Gastrocnemius medialis (tissue), 4 donors: ENCODE measurements at regions of chr1 and their contacts with region 1.

Region 1: DNA sequence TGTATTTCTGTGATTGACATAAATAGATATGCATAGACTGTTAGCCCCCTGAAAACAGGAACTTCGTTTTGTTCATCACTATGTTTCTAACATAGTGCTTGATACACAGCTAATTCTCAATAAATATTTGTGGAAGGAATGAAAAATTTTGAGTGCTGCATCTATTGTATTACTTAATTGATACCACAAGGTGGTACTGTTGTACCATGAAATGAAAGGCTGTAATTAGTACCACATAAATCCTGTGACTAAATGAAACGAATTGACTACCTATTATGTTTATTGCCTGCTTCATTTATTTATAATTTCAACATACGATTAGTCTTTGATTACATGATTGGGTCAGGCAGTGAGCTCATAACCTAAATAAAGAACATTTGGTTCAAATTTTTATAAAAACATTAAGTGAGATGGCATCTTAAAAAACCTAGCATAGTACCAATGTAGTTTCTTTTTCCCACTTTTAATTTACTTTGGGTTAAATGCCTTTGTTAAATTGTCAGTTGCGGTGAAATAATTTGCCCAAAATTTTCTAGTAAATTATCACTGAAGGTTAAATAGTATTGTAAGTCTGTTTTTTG is 15.0 kb upstream of the TGFB2 start:
- DNase-seq: no peak
- ATAC-seq: no peak
- H3K4me3 ChIP-seq: no peak overlapping the region
- H3K27ac ChIP-seq: no peak overlapping the region
- H3K4me1 ChIP-seq: peaks cover 0 to 3% of the 10 kb centered on the region in 2 donors
- H3K27me3 ChIP-seq: no peaks in the 10 kb centered on the region
- CTCF ChIP-seq: peak; percentile 65 to 77 (median 68)
- POLR2A ChIP-seq: no peak

Region 2: GRCh38 chr1:218510153-218510772 is 180.1 kb after region 1 on chr1:
- in situ Hi-C with region 1: loop called in 2 of 4 experiments (anchors 5 to 10 kb)
- intact Hi-C with region 1: no loop called
- DNase-seq: no peak
- ATAC-seq: no peak
- H3K4me3 ChIP-seq: no peak overlapping the region
- H3K27ac ChIP-seq: no peak overlapping the region
- H3K4me1 ChIP-seq: no peaks in the 10 kb centered on the region
- H3K27me3 ChIP-seq: no peaks in the 10 kb centered on the region
- CTCF ChIP-seq: no peak
- POLR2A ChIP-seq: no peak

Region 3: GRCh38 chr1:219066631-219067349 is 736.7 kb after region 1 on chr1:
- in situ Hi-C with region 1: loop called in 1 of 4 experiments (anchors 10 kb)
- intact Hi-C with region 1: no loop called
- DNase-seq: no peak
- ATAC-seq: no peak
- H3K4me3 ChIP-seq: no peak overlapping the region
- H3K27ac ChIP-seq: no peak overlapping the region
- H3K4me1 ChIP-seq: no peaks in the 10 kb centered on the region
- H3K27me3 ChIP-seq: no peaks in the 10 kb centered on the region
- CTCF ChIP-seq: peak in 1 of 5 experiments; percentile 16
- POLR2A ChIP-seq: no peak

Region 4: GRCh38 chr1:219416594-219417238 is 1086.6 kb after region 1 on chr1:
- in situ Hi-C with region 1: loop called in 1 of 4 experiments (anchors 25 kb)
- intact Hi-C with region 1: loop called (anchors 10 kb)
- DNase-seq: peak in 1 of 2 donors; percentile 24
- ATAC-seq: peak in 1 of 2 donors; percentile 33
- H3K4me3 ChIP-seq: no peak overlapping the region
- H3K27ac ChIP-seq: no peak overlapping the region
- H3K4me1 ChIP-seq: peaks cover 4 to 7% of the 10 kb centered on the region in 2 donors
- H3K27me3 ChIP-seq: no peaks in the 10 kb centered on the region
- CTCF ChIP-seq: peak in 4 of 5 experiments; percentile 22 to 53 (median 34)
- POLR2A ChIP-seq: no peak

Region 5: DNA sequence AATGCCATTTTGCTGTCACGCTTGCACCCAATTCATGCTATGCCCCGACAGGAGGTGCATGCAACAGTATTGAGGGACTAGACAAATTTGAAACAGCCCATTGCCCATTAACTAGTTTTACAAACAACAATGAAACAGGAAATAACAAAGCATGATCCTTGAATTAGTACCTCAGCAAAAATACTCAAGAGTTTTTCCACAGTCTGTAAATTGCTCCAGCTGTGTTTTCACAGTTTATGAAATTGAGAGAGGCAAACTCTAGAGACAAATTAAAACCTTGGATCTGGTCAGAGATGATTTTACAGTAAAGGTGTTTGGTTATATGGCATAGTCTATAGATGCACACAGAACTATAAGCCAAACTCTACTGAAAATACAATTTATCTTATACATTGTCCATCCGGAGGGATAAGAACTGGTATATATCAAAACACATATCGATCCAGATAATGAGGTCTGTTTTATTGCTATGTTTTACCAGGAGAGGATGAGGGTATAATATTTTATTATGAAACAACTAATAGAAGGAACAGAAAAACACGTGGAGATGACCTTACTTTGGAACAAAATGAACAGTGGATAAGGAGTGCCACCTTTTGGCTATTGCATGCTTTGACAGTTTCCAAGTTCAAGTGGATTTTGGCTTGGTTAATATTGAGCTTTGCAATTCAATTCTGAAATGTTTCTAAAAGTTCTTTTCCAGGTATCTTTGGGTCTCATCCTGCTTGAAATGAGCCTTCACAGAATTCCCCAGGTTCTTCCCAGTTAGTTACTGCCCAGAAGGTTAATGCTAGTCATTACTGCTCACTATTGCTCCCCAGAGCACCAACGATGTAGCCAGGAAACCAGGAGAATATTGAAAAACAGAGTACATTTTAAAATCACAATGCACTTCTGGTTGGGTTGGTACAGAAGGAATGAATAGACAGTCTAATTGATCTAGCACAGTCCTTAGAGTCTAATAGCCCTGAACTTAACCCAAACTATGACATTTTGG is 1237.1 kb after region 1 on chr1:
- in situ Hi-C with region 1: loop called in 2 of 4 experiments (anchors 10 kb)
- intact Hi-C with region 1: loop called (anchors 5 kb)
- DNase-seq: no peak
- ATAC-seq: peak; percentile 47 to 60
- H3K4me3 ChIP-seq: no peak overlapping the region
- H3K27ac ChIP-seq: no peak overlapping the region
- H3K4me1 ChIP-seq: no peaks in the 10 kb centered on the region
- H3K27me3 ChIP-seq: no peaks in the 10 kb centered on the region
- CTCF ChIP-seq: peak in 2 of 5 experiments; percentile 23 to 32
- POLR2A ChIP-seq: no peak

Region 6: DNA sequence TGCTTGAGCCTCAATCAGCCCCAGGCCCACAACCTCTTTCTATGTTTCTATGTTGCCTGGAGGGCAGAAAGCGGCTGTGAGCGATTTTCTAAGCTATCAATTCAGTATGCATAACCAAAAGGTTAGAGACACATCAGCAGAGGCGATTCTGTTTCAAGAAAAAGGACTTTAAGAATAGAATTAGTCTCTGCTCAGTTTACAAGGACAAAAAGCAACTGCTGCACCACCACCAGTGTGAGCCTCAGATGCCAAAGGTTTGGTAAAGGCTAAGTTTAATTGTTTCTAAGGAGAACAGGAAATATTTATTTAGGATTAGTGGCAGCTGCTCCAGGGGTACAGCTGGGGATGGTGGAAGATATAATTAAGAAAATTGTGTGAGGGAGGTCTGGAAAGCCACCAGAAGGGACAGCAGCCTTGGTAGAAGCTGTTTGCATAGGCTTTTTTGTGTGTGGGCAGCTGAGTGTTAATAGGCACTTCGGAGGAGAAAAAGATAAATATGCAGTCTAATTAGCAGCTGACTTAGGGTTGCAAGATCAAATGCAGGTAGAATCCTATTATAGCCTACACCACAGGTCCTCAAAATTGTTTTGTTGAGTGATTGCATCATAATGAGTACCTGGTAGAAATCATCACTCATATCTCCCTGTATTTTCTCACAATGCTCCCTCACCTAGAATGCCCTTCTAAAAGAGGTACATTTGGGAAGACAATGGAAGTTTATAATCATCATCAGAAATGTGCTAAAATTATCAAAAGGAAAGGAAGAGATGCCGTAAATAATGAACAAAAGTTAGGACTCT is 1247.0 kb after region 1 on chr1:
- in situ Hi-C with region 1: loop called in 1 of 4 experiments (anchors 10 kb)
- intact Hi-C with region 1: no loop called
- DNase-seq: no peak
- ATAC-seq: no peak
- H3K4me3 ChIP-seq: no peak overlapping the region
- H3K27ac ChIP-seq: no peak overlapping the region
- H3K4me1 ChIP-seq: no peaks in the 10 kb centered on the region
- H3K27me3 ChIP-seq: no peaks in the 10 kb centered on the region
- CTCF ChIP-seq: no peak
- POLR2A ChIP-seq: no peak

Region 7: DNA sequence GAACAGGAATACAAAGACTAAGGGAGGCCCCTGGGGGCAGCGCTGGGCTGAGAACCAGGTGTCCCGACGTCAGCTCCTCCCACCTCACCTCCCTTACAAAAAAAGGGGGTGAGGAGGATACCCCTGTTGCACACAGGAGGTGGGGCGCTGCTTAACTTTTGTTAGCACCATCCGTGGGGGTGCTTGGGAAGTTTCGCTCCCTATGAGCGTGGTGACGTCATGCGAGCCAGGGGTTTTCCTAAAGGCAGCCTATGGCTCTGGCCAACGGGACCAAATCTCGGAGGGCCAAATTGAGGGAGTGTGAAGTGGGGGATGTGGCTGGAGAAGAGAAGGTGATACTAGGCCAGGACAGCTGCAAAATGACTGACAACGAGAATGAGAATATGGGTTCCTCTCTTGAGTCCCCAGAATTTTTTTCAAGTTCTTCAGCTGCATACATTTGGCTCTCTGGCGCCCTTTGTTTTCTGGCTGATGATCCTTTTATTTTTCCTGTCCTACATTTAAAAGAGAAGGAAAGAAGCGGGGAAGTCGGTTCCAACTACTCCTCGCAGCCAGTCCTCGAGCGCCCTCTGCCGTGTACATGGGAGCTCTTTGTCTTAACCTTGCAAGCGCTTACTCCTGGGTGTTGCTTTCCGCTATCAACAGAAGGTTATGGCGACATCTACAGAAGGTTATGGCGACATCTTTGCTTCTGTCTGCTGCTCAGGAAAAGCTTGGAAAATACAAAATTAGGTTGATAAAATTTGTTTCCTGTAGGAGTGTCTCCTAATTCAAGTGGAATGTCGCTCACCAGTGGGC is 1330.7 kb after region 1 on chr1:
- in situ Hi-C with region 1: loop called (anchors 25 kb)
- intact Hi-C with region 1: loop called (anchors 10 kb)
- DNase-seq: peak; percentile 64 to 78
- ATAC-seq: peak; percentile 83 to 87
- H3K4me3 ChIP-seq: peak overlapping the region in 3 of 4 donors; percentile 0 to 32 (median 19)
- H3K27ac ChIP-seq: no peak overlapping the region
- H3K4me1 ChIP-seq: peaks cover 0 to 5% of the 10 kb centered on the region in 2 donors
- H3K27me3 ChIP-seq: no peaks in the 10 kb centered on the region
- CTCF ChIP-seq: peak in 4 of 5 experiments; percentile 26 to 71 (median 52)
- POLR2A ChIP-seq: no peak